B cell (primary cell): ENCODE measurements at regions of chr10 and their contacts with region 1.

Region 1: DNA sequence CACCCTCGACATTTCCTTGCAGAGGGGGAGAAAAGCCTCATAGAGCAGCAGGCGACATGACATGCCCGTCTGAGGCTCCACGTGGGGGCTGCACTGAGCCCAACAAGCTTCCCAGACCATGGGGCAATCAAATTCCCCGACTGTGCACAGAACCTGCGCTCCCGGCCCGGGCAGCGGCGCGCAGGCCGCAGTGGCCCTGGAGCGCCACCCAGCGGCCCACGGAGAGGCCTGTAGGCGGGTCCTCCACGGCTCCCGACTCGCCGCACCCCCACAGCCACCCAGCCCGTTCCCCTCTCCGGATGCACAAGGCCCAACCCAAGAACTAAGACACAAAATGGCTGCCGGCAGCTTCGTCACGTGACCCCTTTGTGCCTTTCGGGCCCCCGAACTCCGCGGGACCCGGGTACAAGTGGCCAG is 816 bp downstream of the EPC1 start:
- DNase-seq: peak; percentile 97
- ATAC-seq: peak; percentile 84
- H3K4me3 ChIP-seq: peak overlapping the region; percentile 82 to 100 (median 98)
- H3K4me3 Mint-ChIP-seq: peak overlapping the region; percentile 97
- H3K27ac ChIP-seq: peak overlapping the region; percentile 99 to 100
- H3K27ac Mint-ChIP-seq: peak overlapping the region; percentile 100
- H3K4me1 ChIP-seq: peaks cover 38 to 51% of the 10 kb centered on the region in 2 donors
- H3K4me1 Mint-ChIP-seq: peaks cover 69% of the 10 kb centered on the region
- H3K27me3 ChIP-seq: no peaks in the 10 kb centered on the region
- H3K27me3 Mint-ChIP-seq: no peaks in the 10 kb centered on the region
- CTCF ChIP-seq: peak; percentile 94

Region 2: DNA sequence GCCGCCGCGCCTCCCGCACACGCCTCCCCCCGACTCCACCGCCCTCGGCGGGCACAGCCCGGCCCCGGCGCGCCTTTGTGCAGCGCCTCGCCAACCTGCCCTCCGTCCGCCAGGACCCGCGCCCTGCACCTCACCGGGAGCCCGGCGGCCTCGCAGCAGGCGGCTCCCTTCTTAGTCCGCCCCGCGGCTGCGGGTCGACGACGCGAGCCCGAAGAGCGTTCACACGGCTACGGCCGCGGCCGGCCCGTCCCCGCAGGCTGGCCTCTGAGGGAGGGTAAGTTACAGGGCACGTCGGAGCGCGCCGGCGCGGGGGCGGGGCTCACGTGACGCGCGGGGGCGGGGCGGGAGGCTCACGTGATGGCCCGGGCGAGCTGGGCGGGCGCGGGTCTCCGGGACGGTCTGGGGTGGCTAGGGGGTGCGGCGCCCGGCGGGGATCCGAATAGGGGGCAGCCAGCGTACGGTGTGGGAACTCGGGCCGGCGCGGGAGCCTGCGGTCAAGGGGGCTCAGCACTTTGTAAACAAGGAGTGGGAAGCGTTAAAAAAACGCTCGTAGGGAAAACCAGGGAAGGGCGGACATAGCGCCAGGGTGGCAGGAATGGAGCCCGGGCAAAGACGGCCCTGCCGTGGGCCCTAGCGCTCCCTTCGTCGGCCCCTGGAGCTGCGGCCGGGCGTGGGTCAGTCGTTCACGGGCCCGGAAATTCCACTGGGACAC is 417.4 kb before region 1 on chr10 and contains the start of gene ARHGAP12:
- CTCF ChIA-PET with region 1: no interaction called
- POLR2A ChIA-PET with region 1: no interaction called
- intact Hi-C with region 1: loop called (anchors 2 kb)
- DNase-seq: peak; percentile 92
- ATAC-seq: peak; percentile 80
- H3K4me3 ChIP-seq: peak within 1 kb of the TSS; percentile 77 to 96 (median 93)
- H3K4me3 Mint-ChIP-seq: peak within 1 kb of the TSS; percentile 75
- H3K27ac ChIP-seq: peak within 1 kb of the TSS; percentile 74 to 90
- H3K27ac Mint-ChIP-seq: peak within 1 kb of the TSS; percentile 90
- H3K4me1 ChIP-seq: peaks cover 20 to 31% of the 10 kb centered on the region in 2 donors
- H3K4me1 Mint-ChIP-seq: peaks cover 44% of the 10 kb centered on the region
- H3K27me3 ChIP-seq: no peaks in the 10 kb centered on the region
- H3K27me3 Mint-ChIP-seq: no peaks in the 10 kb centered on the region
- CTCF ChIP-seq: no peak
- total RNA-seq, gene ARHGAP12: 41.0 and 45.3 TPM in 2 replicates

Region 3: DNA sequence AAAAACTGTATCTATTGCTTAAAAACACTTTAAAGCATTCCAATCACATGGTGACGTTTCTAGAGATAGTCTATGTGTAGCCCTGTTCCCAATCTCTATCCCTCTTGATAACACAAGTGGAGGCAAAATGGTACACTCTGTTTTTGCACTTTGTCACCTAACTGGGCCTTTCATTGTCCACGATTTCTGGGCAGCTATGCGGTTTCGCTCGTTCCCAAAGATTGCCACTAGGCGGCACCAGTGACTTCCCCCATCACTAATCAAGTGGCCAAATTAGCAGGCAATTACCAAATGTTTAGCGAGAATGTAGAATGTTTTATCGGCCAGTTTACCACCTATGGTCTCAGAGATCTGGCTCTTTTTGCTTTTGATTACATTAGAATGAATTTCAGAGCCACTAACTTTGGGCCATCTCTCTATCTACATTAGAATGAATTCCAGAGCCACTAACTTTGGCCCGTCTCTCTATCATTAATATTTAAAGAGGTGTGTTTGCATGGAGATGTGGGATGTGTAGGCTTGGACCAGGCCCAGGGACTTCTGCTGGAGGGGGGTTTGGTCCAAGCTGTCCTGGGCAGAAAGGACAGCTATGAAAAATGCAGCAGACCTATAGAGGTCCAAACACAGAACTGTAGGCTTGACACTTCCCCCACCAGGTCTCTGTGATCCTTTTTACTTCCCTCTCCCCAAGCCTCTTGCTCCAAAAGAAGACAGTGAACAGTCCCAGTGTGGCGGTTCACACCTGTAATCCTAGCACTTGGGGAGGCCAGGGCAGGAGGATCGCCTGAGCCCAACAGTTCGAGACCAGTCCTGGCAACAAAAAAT is 89.3 kb before region 1 on chr10:
- CTCF ChIA-PET with region 1: interaction called, 59 read pairs
- POLR2A ChIA-PET with region 1: interaction called, 3 read pairs
- intact Hi-C with region 1: loop called (anchors 1 kb)
- DNase-seq: peak; percentile 81
- ATAC-seq: peak; percentile 92
- H3K4me3 ChIP-seq: no peak overlapping the region
- H3K4me3 Mint-ChIP-seq: peak overlapping the region; percentile 16
- H3K27ac ChIP-seq: no peak overlapping the region
- H3K27ac Mint-ChIP-seq: no peak overlapping the region
- H3K4me1 ChIP-seq: peaks cover 3 to 7% of the 10 kb centered on the region in 2 donors
- H3K4me1 Mint-ChIP-seq: peaks cover 6% of the 10 kb centered on the region
- H3K27me3 ChIP-seq: no peaks in the 10 kb centered on the region
- H3K27me3 Mint-ChIP-seq: no peaks in the 10 kb centered on the region
- CTCF ChIP-seq: peak; percentile 93

Region 4: GRCh38 chr10:32318476-32318896 is 27.7 kb before region 1 on chr10:
- CTCF ChIA-PET with region 1: interaction called, 3 read pairs
- POLR2A ChIA-PET with region 1: no interaction called
- intact Hi-C with region 1: loop called (anchors 5 kb)
- DNase-seq: peak; percentile 51
- ATAC-seq: peak; percentile 46
- H3K4me3 ChIP-seq: peak overlapping the region in 1 of 5 experiments; percentile 20
- H3K4me3 Mint-ChIP-seq: peak overlapping the region; percentile 64
- H3K27ac ChIP-seq: peak overlapping the region; percentile 40 to 66
- H3K27ac Mint-ChIP-seq: peak overlapping the region; percentile 74
- H3K4me1 ChIP-seq: peaks cover 59 to 76% of the 10 kb centered on the region in 2 donors
- H3K4me1 Mint-ChIP-seq: peaks cover 83% of the 10 kb centered on the region
- H3K27me3 ChIP-seq: no peaks in the 10 kb centered on the region
- H3K27me3 Mint-ChIP-seq: no peaks in the 10 kb centered on the region
- CTCF ChIP-seq: no peak

Region 5: GRCh38 chr10:32367793-32368453 is 21.8 kb after region 1 on chr10:
- CTCF ChIA-PET with region 1: interaction called, 24 read pairs
- POLR2A ChIA-PET with region 1: no interaction called
- intact Hi-C with region 1: no loop called
- DNase-seq: peak; percentile 81
- ATAC-seq: peak; percentile 77
- H3K4me3 ChIP-seq: no peak overlapping the region
- H3K4me3 Mint-ChIP-seq: no peak overlapping the region
- H3K27ac ChIP-seq: peak overlapping the region in 1 of 2 donors; percentile 27
- H3K27ac Mint-ChIP-seq: no peak overlapping the region
- H3K4me1 ChIP-seq: peaks cover 6% of the 10 kb centered on the region in 2 donors
- H3K4me1 Mint-ChIP-seq: peaks cover 27% of the 10 kb centered on the region
- H3K27me3 ChIP-seq: no peaks in the 10 kb centered on the region
- H3K27me3 Mint-ChIP-seq: no peaks in the 10 kb centered on the region
- CTCF ChIP-seq: peak; percentile 89

Region 6: DNA sequence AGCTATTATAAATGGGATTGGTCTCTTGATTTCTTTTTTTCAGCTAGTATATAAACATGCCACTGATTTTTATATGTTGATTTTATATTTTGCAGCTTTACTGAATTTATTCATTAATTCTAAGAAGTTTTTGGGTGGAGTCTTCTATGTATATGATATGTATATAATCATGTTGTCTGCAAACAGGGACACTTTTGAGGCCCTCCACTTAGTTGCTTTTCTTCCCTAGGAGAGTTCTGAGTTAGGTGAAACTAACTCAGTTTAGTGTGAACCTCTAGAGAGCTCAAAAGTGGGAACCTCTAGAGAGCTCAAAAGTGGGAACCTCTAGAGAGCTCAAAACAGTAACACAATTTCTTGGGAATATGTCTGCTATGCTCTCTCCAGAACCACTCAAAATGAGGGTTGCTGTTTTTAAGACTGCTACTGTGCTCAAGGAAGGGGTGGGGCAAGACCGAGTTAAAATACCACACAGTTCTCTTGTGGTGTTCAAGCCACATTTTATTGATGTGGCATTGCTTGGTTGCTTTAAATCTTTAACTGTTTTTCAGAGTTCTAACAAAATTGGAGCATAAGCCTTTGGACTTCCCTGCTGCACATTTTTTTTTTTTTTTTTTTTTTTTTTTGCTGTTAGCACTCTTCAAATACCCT is 113.0 kb after region 1 on chr10:
- CTCF ChIA-PET with region 1: no interaction called
- POLR2A ChIA-PET with region 1: no interaction called
- intact Hi-C with region 1: no loop called
- DNase-seq: no peak
- ATAC-seq: no peak
- H3K4me3 ChIP-seq: no peak overlapping the region
- H3K4me3 Mint-ChIP-seq: no peak overlapping the region
- H3K27ac ChIP-seq: no peak overlapping the region
- H3K27ac Mint-ChIP-seq: no peak overlapping the region
- H3K4me1 ChIP-seq: no peaks in the 10 kb centered on the region
- H3K4me1 Mint-ChIP-seq: no peaks in the 10 kb centered on the region
- H3K27me3 ChIP-seq: no peaks in the 10 kb centered on the region
- H3K27me3 Mint-ChIP-seq: no peaks in the 10 kb centered on the region
- CTCF ChIP-seq: no peak